ENCODE measurements at regions of chr2 and their contacts with region 1.

Region 1: GRCh38 chr2:200901459-200902072 is 12.4 kb downstream of the NIF3L1 start:
- DNase-seq: peak; percentile 66 to 85 (median 74)
- ATAC-seq: peak; percentile 96
- H3K4me3 ChIP-seq: no peak overlapping the region
- H3K27ac ChIP-seq: no peak overlapping the region
- H3K4me1 ChIP-seq: peaks cover 3% of the 10 kb centered on the region
- H3K27me3 ChIP-seq: no peaks in the 10 kb centered on the region
- CTCF ChIP-seq: peak; percentile 16 to 88 (median 74)
- POLR2A ChIP-seq: no peak

Region 2: DNA sequence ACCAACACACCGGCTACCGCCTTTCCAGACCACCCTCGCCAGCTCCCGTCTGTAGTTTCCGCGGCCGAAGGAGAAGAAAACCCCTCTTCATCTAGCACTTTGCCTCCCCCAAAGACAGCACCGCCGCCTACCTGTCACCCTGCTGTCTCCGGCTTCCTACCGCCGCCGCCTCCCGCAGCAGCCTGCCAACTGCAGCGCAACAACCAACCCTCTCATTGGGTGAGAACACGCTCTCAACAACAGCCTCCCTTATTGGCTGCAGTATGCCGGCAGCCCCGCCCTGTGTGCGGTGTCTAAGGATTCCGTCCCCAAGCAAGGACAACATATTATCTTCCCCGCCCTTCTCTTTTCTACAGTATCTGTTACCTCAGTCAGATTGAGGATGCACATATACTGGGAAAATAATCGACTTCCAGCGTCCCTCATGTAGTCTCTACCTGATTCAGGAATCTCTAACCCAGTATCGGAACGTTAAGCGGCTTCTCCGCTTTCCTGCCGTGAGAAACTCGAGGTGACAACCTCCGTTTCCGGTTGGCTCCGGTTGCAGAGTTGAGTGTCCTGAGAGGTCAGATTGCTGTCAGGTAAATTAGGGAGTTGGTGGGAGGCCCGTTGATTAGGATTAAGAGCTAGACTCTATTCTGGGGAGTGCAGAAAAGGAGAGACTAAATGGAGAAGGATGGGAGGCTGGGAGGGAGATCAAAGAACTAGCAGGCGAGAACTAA is 170.1 kb after region 1 on chr2 and contains the starts of genes HYCC2 and NDUFB3:
- intact Hi-C with region 1: loop called (anchors 10 kb)
- DNase-seq: peak; percentile 90 to 93 (median 92)
- ATAC-seq: peak; percentile 100
- H3K4me3 ChIP-seq: peak within 1 kb of the TSS; percentile 71 to 93
- H3K27ac ChIP-seq: peak within 1 kb of the TSS; percentile 73 to 94 (median 88)
- H3K4me1 ChIP-seq: peaks cover 36% of the 10 kb centered on the region
- H3K27me3 ChIP-seq: no peaks in the 10 kb centered on the region
- CTCF ChIP-seq: peak in 5 of 7 experiments; percentile 22 to 66 (median 48)
- POLR2A ChIP-seq: peak in 2 of 3 donors; percentile 75 to 82
- total RNA-seq, gene HYCC2: 9.3 to 24.7 TPM
- total RNA-seq, gene NDUFB3: 19.8 to 31.1 TPM

Region 3: DNA sequence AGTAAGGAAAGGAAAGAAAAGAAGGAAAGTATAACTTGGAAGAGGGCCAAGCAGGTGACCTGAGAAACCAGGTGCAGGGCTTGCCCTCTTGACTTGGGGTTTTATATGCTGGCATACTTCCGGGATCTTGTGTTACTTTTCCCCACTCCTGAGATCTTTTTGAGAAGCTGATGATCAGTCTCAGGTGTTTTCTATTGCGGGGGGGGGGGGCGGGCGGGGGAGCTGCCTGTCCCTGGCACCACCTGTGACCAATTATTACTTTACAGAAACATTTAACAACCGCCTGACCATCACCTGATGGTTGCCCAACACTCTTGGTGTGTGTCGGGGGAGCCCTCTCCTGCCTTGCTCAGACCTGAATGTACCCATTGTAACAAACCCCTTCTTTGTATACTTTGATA is 274.5 kb after region 1 on chr2:
- intact Hi-C with region 1: loop called (anchors 5 kb)
- DNase-seq: peak in 3 of 4 donors; percentile 43 to 65 (median 48)
- ATAC-seq: peak; percentile 68
- H3K4me3 ChIP-seq: no peak overlapping the region
- H3K27ac ChIP-seq: peak overlapping the region in 3 of 4 donors; percentile 39 to 68 (median 47)
- H3K4me1 ChIP-seq: peaks cover 14% of the 10 kb centered on the region
- H3K27me3 ChIP-seq: no peaks in the 10 kb centered on the region
- CTCF ChIP-seq: no peak
- POLR2A ChIP-seq: no peak

Region 4: GRCh38 chr2:201344663-201345366 is 443.2 kb after region 1 on chr2:
- intact Hi-C with region 1: no loop called
- DNase-seq: no peak
- ATAC-seq: no peak
- H3K4me3 ChIP-seq: no peak overlapping the region
- H3K27ac ChIP-seq: no peak overlapping the region
- H3K4me1 ChIP-seq: no peaks in the 10 kb centered on the region
- H3K27me3 ChIP-seq: no peaks in the 10 kb centered on the region
- CTCF ChIP-seq: peak in 2 of 7 experiments; percentile 4 to 12
- POLR2A ChIP-seq: no peak